Vagina (tissue), 2 donors: ENCODE measurements at regions of chr17 and their contacts with region 1.

Region 1: DNA sequence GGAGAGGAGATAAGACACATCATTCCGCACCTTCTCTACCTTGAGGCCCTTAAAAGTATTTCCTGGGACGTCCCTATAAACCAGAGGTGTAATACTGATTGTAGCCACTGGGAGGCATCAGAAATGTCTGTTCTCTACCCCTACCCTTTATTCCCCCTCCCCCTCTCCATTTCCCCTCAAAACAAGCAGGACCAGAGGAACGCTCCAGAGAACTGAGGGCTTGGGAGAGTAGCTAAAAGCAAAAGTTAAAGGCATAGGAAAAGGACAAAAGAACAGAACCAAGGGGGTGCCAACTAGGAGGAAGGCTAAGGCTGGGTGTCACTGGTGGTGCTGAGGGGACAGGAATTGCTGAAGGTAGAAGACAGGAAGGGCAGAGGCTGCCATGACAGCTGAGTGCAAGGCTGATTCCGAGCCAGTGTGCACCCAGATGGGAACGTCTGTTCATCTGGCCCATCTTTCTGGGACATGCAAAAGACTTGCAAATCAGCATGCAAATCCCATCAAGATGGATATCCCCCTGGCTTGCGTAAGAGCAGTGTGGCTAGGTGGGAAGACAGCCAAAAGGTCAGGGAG is 6.7 kb downstream of the CAMTA2 start:
- DNase-seq: no peak
- H3K4me3 ChIP-seq: no peak overlapping the region
- H3K27ac ChIP-seq: no peak overlapping the region
- H3K4me1 ChIP-seq: peaks cover 4% of the 10 kb centered on the region
- H3K27me3 ChIP-seq: no peaks in the 10 kb centered on the region
- CTCF ChIP-seq: peak; percentile 41 to 71 (median 59)
- POLR2A ChIP-seq: no peak

Region 2: GRCh38 chr17:4908301-4908700 is 72.4 kb before region 1 on chr17:
- intact Hi-C with region 1: loop called (anchors 5 kb)
- DNase-seq: no peak
- H3K4me3 ChIP-seq: no peak overlapping the region
- H3K27ac ChIP-seq: peak overlapping the region; percentile 69
- H3K4me1 ChIP-seq: peaks cover 21% of the 10 kb centered on the region
- H3K27me3 ChIP-seq: no peaks in the 10 kb centered on the region
- CTCF ChIP-seq: no peak
- POLR2A ChIP-seq: no peak

Region 3: GRCh38 chr17:5049314-5049895 is 68.7 kb after region 1 on chr17:
- intact Hi-C with region 1: no loop called
- DNase-seq: no peak
- H3K4me3 ChIP-seq: no peak overlapping the region
- H3K27ac ChIP-seq: peak overlapping the region; percentile 72
- H3K4me1 ChIP-seq: peaks cover 20% of the 10 kb centered on the region
- H3K27me3 ChIP-seq: no peaks in the 10 kb centered on the region
- CTCF ChIP-seq: no peak
- POLR2A ChIP-seq: no peak

Region 4: DNA sequence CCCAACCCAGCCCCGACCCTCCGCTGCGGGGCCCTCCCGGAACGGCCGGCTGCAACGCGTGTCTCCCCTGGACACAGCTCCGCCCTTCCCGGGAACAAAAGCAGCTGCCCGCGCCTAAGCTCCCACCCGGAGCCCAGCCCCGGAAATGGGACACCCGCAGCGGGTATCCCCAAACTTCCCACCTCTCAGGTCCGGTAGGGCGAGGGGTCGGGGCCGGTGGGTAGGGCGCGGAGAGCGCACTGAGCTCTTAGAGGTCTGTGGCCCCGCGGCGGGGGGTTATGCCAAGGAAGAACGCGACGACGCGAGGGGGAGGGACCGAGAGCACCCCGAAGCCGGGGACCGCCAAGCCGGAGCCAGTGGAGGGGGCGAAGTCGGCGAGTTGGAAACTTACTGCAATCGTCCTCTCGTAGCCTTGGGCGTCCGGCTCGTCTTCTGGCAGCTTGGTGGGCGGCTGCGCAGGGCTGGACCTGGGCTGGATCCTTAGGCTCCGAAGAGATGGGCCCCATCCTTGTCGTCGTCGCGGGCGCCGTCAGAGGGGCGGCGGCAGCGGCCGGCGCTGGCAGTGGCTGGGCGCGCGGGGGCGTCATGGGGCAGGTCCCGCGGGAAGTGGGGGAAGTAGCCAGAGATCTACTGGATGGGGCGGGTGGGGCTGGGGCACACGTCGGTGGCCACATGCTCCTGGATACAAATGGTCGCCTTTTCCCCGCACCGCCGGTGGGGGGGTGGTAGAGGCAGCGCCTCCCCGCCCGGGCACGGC is 142.0 kb after region 1 on chr17:
- intact Hi-C with region 1: no loop called
- DNase-seq: peak; percentile 77
- H3K4me3 ChIP-seq: peak overlapping the region; percentile 48 to 53
- H3K27ac ChIP-seq: no peak overlapping the region
- H3K4me1 ChIP-seq: peaks cover 14% of the 10 kb centered on the region
- H3K27me3 ChIP-seq: no peaks in the 10 kb centered on the region
- CTCF ChIP-seq: no peak
- POLR2A ChIP-seq: no peak